ENCODE measurements at regions of chr4 and their contacts with region 1.

Region 1: DNA sequence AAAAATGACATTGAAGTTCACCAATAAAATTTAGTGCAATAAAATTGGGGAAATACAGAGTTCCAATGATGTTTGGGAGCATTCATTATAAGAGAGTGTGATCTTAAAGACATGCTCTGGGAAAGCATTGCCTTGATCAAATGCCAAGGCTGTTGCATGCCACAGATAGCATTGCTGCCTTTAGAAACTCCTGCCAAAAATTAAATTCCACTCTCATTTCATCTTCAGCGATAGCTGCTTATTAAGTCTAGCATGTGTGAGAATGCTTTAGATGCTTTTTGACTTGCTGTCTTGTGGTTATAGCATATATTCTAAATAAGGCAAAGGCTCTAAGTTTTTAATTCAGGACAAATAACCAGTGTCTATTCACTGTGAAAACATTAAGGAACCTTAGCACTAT is 49.3 kb downstream of the NPNT start:
- DNase-seq: no peak
- H3K4me3 ChIP-seq: no peak overlapping the region
- H3K27ac ChIP-seq: no peak overlapping the region
- H3K4me1 ChIP-seq: no peaks in the 10 kb centered on the region
- H3K27me3 ChIP-seq: no peaks in the 10 kb centered on the region
- CTCF ChIP-seq: no peak
- EP300 ChIP-seq: no peak
- POLR2A ChIP-seq: no peak

Region 2: GRCh38 chr4:105075045-105075444 is 869.5 kb before region 1 on chr4:
- in situ Hi-C with region 1: no loop called
- intact Hi-C with region 1: no loop called
- DNase-seq: no peak
- H3K4me3 ChIP-seq: no peak overlapping the region
- H3K27ac ChIP-seq: no peak overlapping the region
- H3K4me1 ChIP-seq: no peaks in the 10 kb centered on the region
- H3K27me3 ChIP-seq: no peaks in the 10 kb centered on the region
- CTCF ChIP-seq: no peak
- EP300 ChIP-seq: no peak
- POLR2A ChIP-seq: no peak

Region 3: DNA sequence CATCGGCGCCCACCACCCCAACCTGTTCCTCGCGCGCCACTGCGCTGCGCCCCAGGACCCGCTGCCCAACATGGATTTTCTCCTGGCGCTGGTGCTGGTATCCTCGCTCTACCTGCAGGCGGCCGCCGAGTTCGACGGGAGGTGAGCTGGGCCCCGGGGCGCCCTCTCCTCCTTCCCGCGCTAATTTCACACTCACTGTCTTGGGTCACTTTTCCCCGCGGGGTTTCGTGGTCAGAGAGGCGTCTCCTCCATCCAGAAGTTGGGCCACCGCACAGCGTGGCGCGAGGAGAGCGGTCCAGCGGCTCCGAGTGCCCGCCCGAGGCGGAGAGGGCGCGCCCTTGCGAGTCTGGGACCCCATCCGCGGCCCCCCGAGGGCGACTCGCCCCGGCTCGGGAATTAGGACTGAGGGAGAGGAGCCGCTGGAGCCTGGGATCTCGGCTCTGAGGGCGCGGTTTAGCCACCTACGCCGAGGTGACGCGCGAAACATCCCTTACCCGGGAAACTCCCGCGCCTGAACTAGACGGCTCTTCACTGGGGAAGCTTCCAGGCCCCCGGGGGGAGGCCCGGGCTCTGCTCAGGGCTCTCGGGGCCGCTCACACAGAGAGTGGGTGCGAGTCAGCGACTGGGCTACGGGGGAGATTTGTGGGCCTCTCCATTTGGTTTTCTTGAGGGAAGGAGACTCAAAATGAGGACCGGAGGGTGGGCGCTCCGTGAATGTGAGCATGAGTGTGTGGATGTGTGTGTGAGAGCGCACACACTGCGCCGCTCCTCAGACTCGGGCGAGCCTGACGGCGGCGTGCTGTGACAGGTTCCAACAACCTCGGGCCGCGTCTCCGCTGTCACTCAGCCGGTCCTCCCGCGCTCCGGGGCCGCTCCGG is 48.7 kb before region 1 on chr4:
- in situ Hi-C with region 1: no loop called
- intact Hi-C with region 1: loop called (anchors 1 kb)
- DNase-seq: peak; percentile 52
- H3K4me3 ChIP-seq: peak overlapping the region; percentile 23 to 71 (median 58)
- H3K27ac ChIP-seq: peak overlapping the region; percentile 64 to 85 (median 81)
- H3K4me1 ChIP-seq: peaks cover 0 to 15% (median 6%) of the 10 kb centered on the region in 4 donors
- H3K27me3 ChIP-seq: peaks cover 19% of the 10 kb centered on the region
- CTCF ChIP-seq: peak in 4 of 5 experiments; percentile 15 to 40 (median 30)
- EP300 ChIP-seq: no peak
- POLR2A ChIP-seq: no peak

Region 4: GRCh38 chr4:106140601-106141000 is 196.1 kb after region 1 on chr4:
- in situ Hi-C with region 1: no loop called
- intact Hi-C with region 1: no loop called
- DNase-seq: no peak
- H3K4me3 ChIP-seq: no peak overlapping the region
- H3K27ac ChIP-seq: no peak overlapping the region
- H3K4me1 ChIP-seq: no peaks in the 10 kb centered on the region
- H3K27me3 ChIP-seq: no peaks in the 10 kb centered on the region
- CTCF ChIP-seq: no peak
- EP300 ChIP-seq: no peak
- POLR2A ChIP-seq: no peak